Transverse colon (tissue), 4 donors: ENCODE measurements at regions of chr7 and their contacts with region 1.

Region 1: DNA sequence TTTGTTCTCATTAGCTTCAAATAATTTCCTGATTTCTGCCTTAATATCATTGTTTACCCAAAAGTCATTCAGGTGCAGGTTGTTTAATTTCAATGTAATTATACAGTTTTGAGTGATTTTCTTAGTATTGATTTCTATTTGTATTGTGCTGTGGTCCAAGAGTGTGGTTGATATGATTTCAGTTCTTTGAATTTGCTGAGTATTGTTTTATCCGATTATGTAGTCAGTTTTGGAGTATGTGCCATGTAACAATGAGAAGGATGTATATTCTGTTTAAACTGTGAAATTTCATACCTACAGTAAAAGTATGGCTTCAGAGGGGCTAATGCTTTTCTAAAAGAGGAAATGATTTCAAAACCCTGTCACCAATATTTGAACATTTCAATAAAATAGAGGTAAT is 17.4 kb upstream of the GRM8 start:
- DNase-seq: no peak
- H3K4me3 ChIP-seq: no peak overlapping the region
- H3K27ac ChIP-seq: no peak overlapping the region
- H3K4me1 ChIP-seq: peaks cover 0 to 9% (median 0%) of the 10 kb centered on the region in 4 donors
- H3K27me3 ChIP-seq: peaks cover 9% of the 10 kb centered on the region
- CTCF ChIP-seq: no peak
- EP300 ChIP-seq: no peak
- POLR2A ChIP-seq: no peak

Region 2: DNA sequence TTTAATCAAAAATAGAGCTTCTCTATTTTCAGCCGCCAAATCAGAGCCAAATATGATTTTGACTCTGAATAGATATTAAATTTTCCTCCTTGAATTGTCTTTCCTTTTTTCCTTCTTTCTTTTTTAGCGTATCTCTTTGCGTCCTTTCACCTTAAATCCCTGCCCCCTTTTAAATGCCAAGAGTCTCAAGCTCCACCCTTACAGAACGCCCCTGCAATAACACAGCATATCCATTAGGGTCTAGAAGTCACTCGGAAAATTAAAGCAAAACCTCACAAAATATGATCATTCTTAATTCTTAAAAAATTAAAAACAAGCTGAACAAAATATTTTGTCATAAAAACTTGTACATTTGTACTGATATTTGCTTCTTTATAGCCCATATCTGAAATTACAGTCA is 34.0 kb after region 1 on chr7:
- in situ Hi-C with region 1: no loop called
- intact Hi-C with region 1: loop called (anchors 1 kb)
- DNase-seq: no peak
- H3K4me3 ChIP-seq: no peak overlapping the region
- H3K27ac ChIP-seq: no peak overlapping the region
- H3K4me1 ChIP-seq: no peaks in the 10 kb centered on the region
- H3K27me3 ChIP-seq: no peaks in the 10 kb centered on the region
- CTCF ChIP-seq: no peak
- EP300 ChIP-seq: no peak
- POLR2A ChIP-seq: no peak

Region 3: GRCh38 chr7:127317447-127317961 is 47.4 kb after region 1 on chr7:
- in situ Hi-C with region 1: no loop called
- intact Hi-C with region 1: no loop called
- DNase-seq: no peak
- H3K4me3 ChIP-seq: no peak overlapping the region
- H3K27ac ChIP-seq: peak overlapping the region in 1 of 4 donors; percentile 21
- H3K4me1 ChIP-seq: no peaks in the 10 kb centered on the region
- H3K27me3 ChIP-seq: no peaks in the 10 kb centered on the region
- CTCF ChIP-seq: no peak
- EP300 ChIP-seq: no peak
- POLR2A ChIP-seq: no peak

Region 4: GRCh38 chr7:127447326-127447945 is 177.3 kb after region 1 on chr7:
- in situ Hi-C with region 1: no loop called
- intact Hi-C with region 1: no loop called
- DNase-seq: peak; percentile 38
- H3K4me3 ChIP-seq: no peak overlapping the region
- H3K27ac ChIP-seq: no peak overlapping the region
- H3K4me1 ChIP-seq: no peaks in the 10 kb centered on the region
- H3K27me3 ChIP-seq: peaks cover 12% of the 10 kb centered on the region
- CTCF ChIP-seq: peak; percentile 45 to 58 (median 56)
- EP300 ChIP-seq: no peak
- POLR2A ChIP-seq: no peak